Activated naive CD4-positive, alpha-beta T cell treated with anti-CD3 and anti-CD28 coated beads for 36 hours (primary cell): ENCODE measurements at regions of chr11 and their contacts with region 1.

Region 1: DNA sequence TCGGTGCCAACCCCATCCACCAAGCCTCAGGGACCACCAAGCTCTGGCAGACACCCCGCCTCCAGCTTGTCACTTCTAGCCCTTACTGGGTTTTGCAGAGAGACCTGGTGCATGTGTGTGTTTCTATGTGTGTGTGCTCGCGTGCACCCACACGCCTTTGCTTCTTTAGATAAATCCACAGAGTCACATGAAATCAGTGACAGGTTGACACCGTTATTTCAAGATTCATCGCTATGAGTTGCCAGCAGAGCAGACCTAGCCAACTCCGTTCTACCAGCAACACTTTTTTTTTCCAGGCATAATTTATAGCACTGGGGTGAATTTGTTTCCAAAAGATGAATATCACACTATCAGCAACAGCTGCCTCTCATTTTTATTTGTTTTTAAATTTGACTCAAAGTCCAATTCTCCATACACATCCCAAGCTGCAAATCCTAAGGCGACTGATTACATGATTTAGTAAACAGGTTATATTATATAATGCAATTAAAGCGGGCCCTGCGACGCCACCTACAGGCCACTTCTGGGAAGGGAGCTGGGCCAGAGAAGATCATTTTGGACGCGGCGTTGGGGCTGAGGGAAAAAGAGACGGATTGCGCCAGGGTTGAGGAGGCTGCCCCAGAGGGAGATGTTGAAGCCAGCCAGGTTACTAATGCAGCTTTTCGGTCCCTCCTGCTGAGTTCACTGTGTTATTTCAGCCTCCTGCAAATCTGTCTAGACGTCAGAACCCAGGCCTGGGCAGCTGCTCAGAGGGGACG is 150.5 kb downstream of the FEZ1 start:
- DNase-seq: peak; percentile 66
- H3K4me3 Mint-ChIP-seq: no peak overlapping the region
- H3K27ac Mint-ChIP-seq: no peak overlapping the region
- H3K4me1 Mint-ChIP-seq: no peaks in the 10 kb centered on the region
- H3K27me3 Mint-ChIP-seq: peaks cover 6% of the 10 kb centered on the region

Region 2: DNA sequence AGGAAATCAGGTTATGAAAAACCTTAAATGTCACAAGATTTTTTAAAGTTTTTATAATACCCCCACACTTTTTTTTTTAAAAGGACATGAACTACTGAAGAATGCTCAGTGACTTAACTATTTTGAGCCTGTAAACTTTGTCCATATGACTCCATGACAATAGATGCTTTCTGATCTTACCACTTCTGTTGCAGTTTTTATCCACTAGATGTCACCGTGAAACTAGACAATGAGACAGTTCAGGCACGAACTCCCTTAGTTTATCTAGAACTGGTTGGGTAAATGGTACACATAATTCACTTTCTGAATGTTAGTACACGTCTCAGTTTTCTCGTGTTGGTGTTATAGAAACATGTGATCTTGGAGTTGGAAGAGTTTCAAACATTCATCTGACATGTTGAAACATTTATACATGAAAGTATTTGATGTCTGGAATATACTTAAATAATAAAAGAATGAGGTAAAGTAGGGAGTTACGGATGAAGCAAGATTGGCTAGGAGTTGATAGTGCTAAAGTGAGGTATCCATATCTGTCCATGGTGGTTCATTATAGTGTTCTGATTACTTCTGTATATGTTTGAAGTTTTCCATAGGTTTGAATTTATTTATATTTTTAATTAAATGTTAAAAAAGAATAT is 383.5 kb before region 1 on chr11:
- CTCF ChIA-PET with region 1: no interaction called
- intact Hi-C with region 1: loop called (anchors 1 kb)
- DNase-seq: no peak
- H3K4me3 Mint-ChIP-seq: no peak overlapping the region
- H3K27ac Mint-ChIP-seq: no peak overlapping the region
- H3K4me1 Mint-ChIP-seq: no peaks in the 10 kb centered on the region
- H3K27me3 Mint-ChIP-seq: no peaks in the 10 kb centered on the region

Region 3: GRCh38 chr11:125091247-125091876 is 254.2 kb before region 1 on chr11:
- CTCF ChIA-PET with region 1: interaction called, 6 read pairs
- intact Hi-C with region 1: loop called (anchors 5 kb)
- DNase-seq: no peak
- H3K4me3 Mint-ChIP-seq: no peak overlapping the region
- H3K27ac Mint-ChIP-seq: no peak overlapping the region
- H3K4me1 Mint-ChIP-seq: no peaks in the 10 kb centered on the region
- H3K27me3 Mint-ChIP-seq: no peaks in the 10 kb centered on the region

Region 4: GRCh38 chr11:125164422-125165110 is 181.0 kb before region 1 on chr11 and contains the start of gene PKNOX2:
- CTCF ChIA-PET with region 1: interaction called, 7 read pairs
- intact Hi-C with region 1: loop called (anchors 1 kb)
- DNase-seq: peak; percentile 74
- H3K4me3 Mint-ChIP-seq: peak within 1 kb of the TSS; percentile 85
- H3K27ac Mint-ChIP-seq: no peak within 1 kb of the TSS
- H3K4me1 Mint-ChIP-seq: peaks cover 15% of the 10 kb centered on the region
- H3K27me3 Mint-ChIP-seq: peaks cover 43% of the 10 kb centered on the region
- total RNA-seq, gene PKNOX2: not detected

Region 5: GRCh38 chr11:125333354-125334073 is 12.1 kb before region 1 on chr11:
- CTCF ChIA-PET with region 1: interaction called, 11 read pairs
- intact Hi-C with region 1: no loop called
- DNase-seq: no peak
- H3K4me3 Mint-ChIP-seq: no peak overlapping the region
- H3K27ac Mint-ChIP-seq: no peak overlapping the region
- H3K4me1 Mint-ChIP-seq: peaks cover 5% of the 10 kb centered on the region
- H3K27me3 Mint-ChIP-seq: peaks cover 8% of the 10 kb centered on the region

Region 6: GRCh38 chr11:125404776-125405435 is 59.3 kb after region 1 on chr11:
- CTCF ChIA-PET with region 1: interaction called, 4 read pairs
- intact Hi-C with region 1: loop called (anchors 2 kb)
- DNase-seq: peak; percentile 78
- H3K4me3 Mint-ChIP-seq: no peak overlapping the region
- H3K27ac Mint-ChIP-seq: no peak overlapping the region
- H3K4me1 Mint-ChIP-seq: peaks cover 2% of the 10 kb centered on the region
- H3K27me3 Mint-ChIP-seq: peaks cover 23% of the 10 kb centered on the region

Region 7: GRCh38 chr11:125663910-125664309 is 318.3 kb after region 1 on chr11:
- CTCF ChIA-PET with region 1: no interaction called
- intact Hi-C with region 1: no loop called
- DNase-seq: no peak
- H3K4me3 Mint-ChIP-seq: no peak overlapping the region
- H3K27ac Mint-ChIP-seq: no peak overlapping the region
- H3K4me1 Mint-ChIP-seq: peaks cover 10% of the 10 kb centered on the region
- H3K27me3 Mint-ChIP-seq: no peaks in the 10 kb centered on the region

Region 8: GRCh38 chr11:125728969-125729368 is 383.4 kb after region 1 on chr11:
- CTCF ChIA-PET with region 1: no interaction called
- intact Hi-C with region 1: no loop called
- DNase-seq: no peak
- H3K4me3 Mint-ChIP-seq: no peak overlapping the region
- H3K27ac Mint-ChIP-seq: no peak overlapping the region
- H3K4me1 Mint-ChIP-seq: no peaks in the 10 kb centered on the region
- H3K27me3 Mint-ChIP-seq: peaks cover 12% of the 10 kb centered on the region

Region 9: GRCh38 chr11:125874556-125875124 is 529.0 kb after region 1 on chr11:
- CTCF ChIA-PET with region 1: no interaction called
- intact Hi-C with region 1: loop called (anchors 5 kb)
- DNase-seq: peak; percentile 74
- H3K4me3 Mint-ChIP-seq: no peak overlapping the region
- H3K27ac Mint-ChIP-seq: no peak overlapping the region
- H3K4me1 Mint-ChIP-seq: no peaks in the 10 kb centered on the region
- H3K27me3 Mint-ChIP-seq: peaks cover 1% of the 10 kb centered on the region